Activated CD4-positive, alpha-beta T cell treated with anti-CD3 and anti-CD28 coated beads for 36 hours (primary cell): ENCODE measurements at regions of chr12 and their contacts with region 1.

Region 1: DNA sequence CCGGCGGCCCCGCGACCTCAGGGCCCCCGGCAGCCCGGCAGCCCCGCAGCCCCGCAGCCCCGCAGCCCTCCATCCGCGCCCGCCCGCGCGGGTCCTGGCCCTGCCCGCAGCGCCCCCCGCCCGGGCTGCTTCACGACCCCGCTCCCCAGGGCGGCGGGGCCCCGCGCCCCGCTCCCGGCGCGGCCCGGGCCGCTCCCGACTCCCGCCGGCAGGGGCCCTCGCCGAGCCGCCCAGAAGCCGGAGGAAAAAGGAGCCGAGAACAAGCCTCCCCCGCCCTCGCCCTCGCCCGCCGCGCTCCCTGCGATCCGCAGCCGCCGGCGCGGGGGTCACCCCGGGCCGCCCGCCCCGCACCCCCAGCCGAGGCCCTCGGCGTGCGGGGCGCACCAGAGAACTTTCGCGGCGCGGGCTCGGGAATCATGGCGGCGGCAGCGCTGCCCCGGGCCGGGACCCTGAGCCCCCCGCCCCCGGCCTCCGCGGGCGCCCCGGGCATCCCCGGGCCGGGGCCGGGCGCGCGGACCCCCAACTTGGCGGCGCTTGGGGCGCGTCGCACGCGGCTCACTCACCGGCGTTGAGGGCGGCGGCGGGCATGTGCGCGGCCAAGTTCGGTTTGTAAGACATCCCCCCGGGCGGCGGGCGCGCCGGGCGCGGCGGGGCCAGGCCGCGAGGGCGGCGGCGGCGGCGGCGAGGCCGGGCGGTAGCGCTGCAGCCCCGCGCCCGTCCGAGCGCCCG is 491 bp downstream of the CDK2AP1 start:
- DNase-seq: peak; percentile 90
- ATAC-seq: peak; percentile 75
- H3K4me3 Mint-ChIP-seq: peak overlapping the region; percentile 86
- H3K27ac Mint-ChIP-seq: no peak overlapping the region
- H3K4me1 Mint-ChIP-seq: peaks cover 23% of the 10 kb centered on the region
- H3K27me3 Mint-ChIP-seq: no peaks in the 10 kb centered on the region

Region 2: DNA sequence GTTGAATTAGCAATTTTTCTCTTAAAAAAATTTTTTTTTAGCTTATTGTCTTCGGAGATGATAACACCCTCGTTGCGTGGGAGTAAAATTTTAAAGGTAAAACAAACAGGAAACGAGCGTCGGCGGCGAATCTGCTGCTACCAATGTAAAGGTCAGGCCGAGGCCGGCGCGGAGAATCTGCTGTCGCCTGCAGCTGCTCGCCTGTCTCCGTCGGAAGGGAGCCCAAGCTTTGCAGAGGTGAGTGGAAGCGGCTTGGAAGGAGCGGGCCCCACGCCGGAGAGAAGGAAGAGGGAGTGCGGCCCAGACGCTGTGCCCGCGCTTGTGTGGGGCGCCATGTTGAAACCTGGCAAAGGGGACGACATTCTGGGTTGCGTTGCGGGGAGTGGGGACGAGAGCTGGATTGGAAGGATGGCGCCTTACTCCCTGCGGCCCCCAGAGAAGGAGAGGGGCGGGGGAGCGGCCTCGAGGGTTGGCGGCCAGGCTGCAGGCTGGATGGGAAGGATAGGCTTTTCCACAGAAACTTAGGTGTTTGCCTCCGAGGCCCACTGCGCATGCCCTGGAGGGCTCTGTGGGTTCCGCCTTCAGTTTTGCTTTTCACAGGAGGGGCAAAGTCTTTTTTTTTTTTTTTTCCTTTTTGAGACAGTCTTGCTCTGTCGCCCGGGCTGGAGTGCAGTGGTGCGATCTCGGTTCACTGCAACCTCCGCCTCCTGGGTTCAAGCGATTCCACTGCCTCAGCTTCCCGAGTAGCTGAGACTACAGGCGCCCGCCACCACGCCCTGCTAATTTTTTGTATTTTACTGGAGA is 187.0 kb after region 1 on chr12 and contains the start of gene SNRNP35:
- CTCF ChIA-PET with region 1: no interaction called
- POLR2A ChIA-PET with region 1: no interaction called
- intact Hi-C with region 1: loop called in 1 of 2 experiments (anchors 1 kb)
- DNase-seq: peak; percentile 88
- ATAC-seq: peak; percentile 73
- H3K4me3 Mint-ChIP-seq: peak within 1 kb of the TSS; percentile 98
- H3K27ac Mint-ChIP-seq: peak within 1 kb of the TSS; percentile 100
- H3K4me1 Mint-ChIP-seq: peaks cover 26% of the 10 kb centered on the region
- H3K27me3 Mint-ChIP-seq: no peaks in the 10 kb centered on the region
- total RNA-seq, gene SNRNP35: 24.1 to 24.8 TPM

Region 3: GRCh38 chr12:123601602-123602489 is 330.7 kb after region 1 on chr12 and contains the start of gene DDX55:
- CTCF ChIA-PET with region 1: no interaction called
- POLR2A ChIA-PET with region 1: no interaction called
- intact Hi-C with region 1: loop called in 1 of 2 experiments (anchors 1 kb)
- DNase-seq: peak; percentile 93
- ATAC-seq: peak; percentile 95
- H3K4me3 Mint-ChIP-seq: peak within 1 kb of the TSS; percentile 85
- H3K27ac Mint-ChIP-seq: peak within 1 kb of the TSS; percentile 92
- H3K4me1 Mint-ChIP-seq: peaks cover 36% of the 10 kb centered on the region
- H3K27me3 Mint-ChIP-seq: no peaks in the 10 kb centered on the region
- total RNA-seq, gene DDX55: 44.3 to 49.4 TPM

Region 4: DNA sequence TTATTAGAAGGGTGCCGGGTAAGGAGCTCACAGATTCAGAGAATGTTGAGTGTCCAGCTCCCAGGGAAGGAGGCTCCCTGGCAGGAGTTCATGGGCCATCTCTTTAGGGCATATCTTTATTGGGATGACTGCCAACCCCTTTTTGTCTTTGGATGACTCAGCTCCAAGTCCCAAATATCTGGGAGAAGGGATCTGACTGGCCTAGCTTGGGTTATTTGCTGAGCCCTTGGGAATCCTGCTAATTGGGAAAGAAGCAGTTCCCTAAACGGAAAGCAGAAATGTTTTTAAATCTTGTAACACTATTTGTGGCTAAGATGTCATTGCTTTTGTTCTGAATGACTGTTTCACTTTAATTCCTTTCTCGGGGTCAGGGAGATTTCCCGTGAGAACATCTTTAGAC is 343.4 kb after region 1 on chr12:
- CTCF ChIA-PET with region 1: no interaction called
- POLR2A ChIA-PET with region 1: no interaction called
- intact Hi-C with region 1: loop called in 1 of 2 experiments (anchors 1 kb)
- DNase-seq: no peak
- ATAC-seq: no peak
- H3K4me3 Mint-ChIP-seq: no peak overlapping the region
- H3K27ac Mint-ChIP-seq: no peak overlapping the region
- H3K4me1 Mint-ChIP-seq: peaks cover 2% of the 10 kb centered on the region
- H3K27me3 Mint-ChIP-seq: no peaks in the 10 kb centered on the region

Region 5: GRCh38 chr12:123670882-123671728 is 399.9 kb after region 1 on chr12 and contains the start of gene TCTN2:
- CTCF ChIA-PET with region 1: no interaction called
- POLR2A ChIA-PET with region 1: no interaction called
- intact Hi-C with region 1: loop called in 1 of 2 experiments (anchors 1 kb)
- DNase-seq: peak; percentile 98
- ATAC-seq: peak; percentile 100
- H3K4me3 Mint-ChIP-seq: peak within 1 kb of the TSS; percentile 78
- H3K27ac Mint-ChIP-seq: peak within 1 kb of the TSS; percentile 25
- H3K4me1 Mint-ChIP-seq: peaks cover 15% of the 10 kb centered on the region
- H3K27me3 Mint-ChIP-seq: no peaks in the 10 kb centered on the region
- total RNA-seq, gene TCTN2: 4.4 to 4.5 TPM